ENCODE measurements at regions of chr16 and their contacts with region 1.

Region 1: GRCh38 chr16:88967830-88968588 is 9.0 kb downstream of the CBFA2T3 start:
- DNase-seq: peak; percentile 94
- H3K4me3 ChIP-seq: peak overlapping the region; percentile 60
- H3K27ac ChIP-seq: peak overlapping the region; percentile 92
- H3K4me1 ChIP-seq: peaks cover 80% of the 10 kb centered on the region
- CTCF ChIP-seq: 0 out of 2 replicates have a peak, but pooled peaks have one; percentile 40

Region 2: DNA sequence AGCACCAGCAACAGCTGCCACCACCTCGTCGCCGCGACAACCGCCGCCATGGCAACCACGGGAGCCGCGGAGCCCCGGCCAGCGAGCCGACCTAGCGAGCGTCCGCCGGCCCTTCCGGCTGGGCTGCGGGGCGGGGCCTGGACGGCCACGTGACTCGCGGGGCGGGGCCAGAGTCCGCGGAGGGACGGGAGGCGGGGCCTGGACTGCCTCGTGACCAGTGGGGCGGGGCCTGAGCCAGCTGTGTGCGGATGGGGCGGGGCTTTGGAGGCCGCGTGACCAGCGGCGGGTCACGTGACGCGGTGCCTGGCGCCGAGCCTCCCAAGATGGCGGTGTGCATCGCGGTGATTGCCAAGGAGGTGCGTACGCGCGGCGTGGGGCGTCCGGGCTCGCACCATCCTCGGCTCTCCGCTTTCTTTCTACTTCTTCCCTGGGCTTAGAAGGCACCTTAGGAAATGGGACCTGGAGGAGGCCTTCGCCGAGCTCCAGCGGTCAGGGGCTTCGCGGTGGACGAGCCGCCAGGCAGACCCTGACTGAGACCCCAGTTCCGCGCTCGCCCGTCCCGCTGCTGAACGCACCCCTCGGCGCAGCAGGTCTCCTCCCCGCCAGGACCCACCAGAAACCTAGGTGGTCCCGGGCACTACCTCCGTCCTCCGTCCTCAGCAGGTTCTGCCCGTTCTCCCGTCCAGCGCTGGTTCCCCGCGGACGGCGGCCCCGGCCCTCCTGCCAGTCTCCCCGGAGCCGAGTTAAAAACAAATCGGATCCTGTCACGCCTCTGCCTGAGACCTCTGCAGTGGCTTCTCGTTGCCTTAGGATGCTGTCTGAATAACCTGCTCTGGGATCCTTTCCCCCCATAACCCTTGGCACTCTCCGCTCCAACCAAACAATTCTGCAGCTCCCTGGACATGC is 110.9 kb before region 1 on chr16 and contains the starts of genes GALNS and TRAPPC2L:
- CTCF ChIA-PET with region 1: no interaction called
- POLR2A ChIA-PET with region 1: no interaction called
- intact Hi-C with region 1: loop called (anchors 5 kb)
- DNase-seq: peak; percentile 99
- H3K4me3 ChIP-seq: peak within 1 kb of the TSS; percentile 83
- H3K27ac ChIP-seq: peak within 1 kb of the TSS; percentile 6
- H3K4me1 ChIP-seq: peaks cover 25% of the 10 kb centered on the region
- CTCF ChIP-seq: no peak
- total RNA-seq, gene GALNS: 17.2 and 18.5 TPM in 2 replicates
- total RNA-seq, gene TRAPPC2L: 27.3 and 27.6 TPM in 2 replicates

Region 3: DNA sequence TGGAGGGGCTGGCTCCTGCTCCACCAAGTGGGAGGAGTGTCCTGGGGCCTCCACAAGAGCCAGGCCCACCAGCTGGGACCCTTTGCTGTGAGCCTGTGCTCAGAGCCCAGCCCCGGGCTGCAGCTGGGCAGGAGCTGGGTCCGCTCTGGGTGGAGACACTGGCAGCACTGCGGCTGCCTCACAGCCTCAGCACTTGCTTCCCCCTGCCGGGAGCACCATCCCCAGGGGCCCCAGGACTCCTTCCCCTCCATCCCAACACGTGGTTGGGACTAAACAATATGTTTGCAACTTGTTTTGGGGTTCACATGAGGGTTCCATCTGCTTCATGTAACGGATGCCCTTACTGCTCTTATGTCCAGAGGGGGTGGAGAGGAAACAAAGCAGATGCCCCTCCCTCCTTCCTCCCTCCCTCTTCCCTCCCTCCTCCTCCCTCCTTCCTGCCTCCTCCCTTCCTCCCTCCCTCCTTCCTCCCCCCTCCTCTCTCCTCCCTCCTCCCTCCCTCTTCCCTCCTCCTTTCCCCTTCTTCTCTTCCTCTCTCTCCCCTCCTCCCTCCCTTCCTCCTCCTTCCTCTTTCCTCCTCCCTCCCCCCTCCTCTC is 25.3 kb after region 1 on chr16:
- CTCF ChIA-PET with region 1: no interaction called
- POLR2A ChIA-PET with region 1: interaction called, 5 read pairs
- intact Hi-C with region 1: loop called (anchors 1 kb)
- DNase-seq: peak; percentile 67
- H3K4me3 ChIP-seq: peak overlapping the region; percentile 43
- H3K27ac ChIP-seq: peak overlapping the region; percentile 99
- H3K4me1 ChIP-seq: peaks cover 42% of the 10 kb centered on the region
- CTCF ChIP-seq: no peak

Region 4: GRCh38 chr16:89099905-89100304 is 131.9 kb after region 1 on chr16:
- CTCF ChIA-PET with region 1: interaction called, 4 read pairs
- POLR2A ChIA-PET with region 1: interaction called, 5 read pairs
- intact Hi-C with region 1: loop called (anchors 1 kb)
- DNase-seq: peak; percentile 28
- H3K4me3 ChIP-seq: peak overlapping the region; percentile 99
- H3K27ac ChIP-seq: peak overlapping the region; percentile 98
- H3K4me1 ChIP-seq: peaks cover 53% of the 10 kb centered on the region
- CTCF ChIP-seq: no peak